ENCODE measurements at regions of chr9 and their contacts with region 1.

Region 1: GRCh38 chr9:97411789-97412625 is at the start of gene TDRD7:
- DNase-seq: peak; percentile 67 to 97 (median 80)

Region 2: GRCh38 chr9:97271292-97271691 is 140.7 kb before region 1 on chr9:
- intact Hi-C with region 1: no loop called
- DNase-seq: peak in 2 of 10 donors; percentile 73 to 79

Region 3: DNA sequence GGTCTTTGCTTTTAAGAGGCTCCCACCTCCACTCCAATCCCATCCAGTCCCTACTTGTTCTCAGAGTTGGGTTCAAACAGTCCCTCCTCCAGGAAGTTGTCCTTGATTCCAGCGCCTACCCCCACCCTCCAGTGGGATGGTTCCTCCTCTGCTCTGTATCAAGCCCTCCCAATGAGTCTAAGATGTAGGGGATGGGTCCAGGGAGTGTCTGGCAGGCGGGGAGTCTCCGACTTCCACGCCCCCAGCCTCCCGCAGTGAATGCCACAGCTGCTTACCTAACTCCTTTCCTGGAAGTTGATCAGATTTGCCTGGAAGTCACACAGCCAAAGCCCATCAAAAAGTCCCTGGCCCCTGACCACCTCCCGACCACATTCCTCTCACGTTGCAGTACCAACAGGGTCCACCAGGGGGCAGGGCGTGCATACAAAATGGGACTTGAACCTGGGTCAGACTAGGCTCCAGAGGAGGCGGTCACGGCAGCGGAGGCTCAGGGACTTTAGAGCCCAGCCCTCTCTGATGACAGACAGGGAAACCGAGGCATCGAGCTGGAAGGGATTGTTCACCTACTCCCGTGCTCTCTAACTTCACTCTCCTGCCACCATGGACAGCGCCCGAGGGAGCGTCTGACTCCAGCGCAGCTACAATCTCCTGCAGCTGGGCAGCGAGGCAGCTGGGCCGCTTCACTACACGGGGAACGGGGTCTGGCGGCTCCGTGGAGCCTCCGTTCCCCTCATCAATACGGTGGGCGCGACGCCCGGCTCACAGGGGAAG is 25.1 kb before region 1 on chr9:
- intact Hi-C with region 1: no loop called
- DNase-seq: peak; percentile 55 to 95 (median 80)

Region 4: GRCh38 chr9:97501177-97501971 is 89.4 kb after region 1 on chr9 and contains the start of gene TMOD1:
- intact Hi-C with region 1: loop called (anchors 1 kb)
- DNase-seq: peak; percentile 52 to 95 (median 68)

Region 5: DNA sequence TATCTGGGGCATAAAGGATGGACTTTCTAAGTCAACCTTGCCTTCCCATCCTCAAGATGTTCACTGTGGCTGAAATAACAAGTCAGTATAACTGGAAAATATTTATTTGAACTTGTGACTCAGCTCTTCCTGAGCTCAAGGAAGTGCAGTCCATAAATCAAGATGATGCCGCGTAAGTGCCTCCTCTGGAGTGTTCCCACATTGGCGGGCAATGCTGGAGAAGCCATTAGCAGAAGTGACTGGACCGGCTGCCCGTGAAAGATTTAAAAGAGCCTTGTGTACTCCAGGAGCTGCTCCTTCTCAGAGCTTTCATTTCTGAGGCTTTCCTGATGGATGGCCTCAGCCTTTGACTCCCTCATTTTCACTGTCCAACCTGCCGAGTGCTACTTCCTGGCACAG is 106.9 kb after region 1 on chr9:
- intact Hi-C with region 1: no loop called
- DNase-seq: no peak

Region 6: DNA sequence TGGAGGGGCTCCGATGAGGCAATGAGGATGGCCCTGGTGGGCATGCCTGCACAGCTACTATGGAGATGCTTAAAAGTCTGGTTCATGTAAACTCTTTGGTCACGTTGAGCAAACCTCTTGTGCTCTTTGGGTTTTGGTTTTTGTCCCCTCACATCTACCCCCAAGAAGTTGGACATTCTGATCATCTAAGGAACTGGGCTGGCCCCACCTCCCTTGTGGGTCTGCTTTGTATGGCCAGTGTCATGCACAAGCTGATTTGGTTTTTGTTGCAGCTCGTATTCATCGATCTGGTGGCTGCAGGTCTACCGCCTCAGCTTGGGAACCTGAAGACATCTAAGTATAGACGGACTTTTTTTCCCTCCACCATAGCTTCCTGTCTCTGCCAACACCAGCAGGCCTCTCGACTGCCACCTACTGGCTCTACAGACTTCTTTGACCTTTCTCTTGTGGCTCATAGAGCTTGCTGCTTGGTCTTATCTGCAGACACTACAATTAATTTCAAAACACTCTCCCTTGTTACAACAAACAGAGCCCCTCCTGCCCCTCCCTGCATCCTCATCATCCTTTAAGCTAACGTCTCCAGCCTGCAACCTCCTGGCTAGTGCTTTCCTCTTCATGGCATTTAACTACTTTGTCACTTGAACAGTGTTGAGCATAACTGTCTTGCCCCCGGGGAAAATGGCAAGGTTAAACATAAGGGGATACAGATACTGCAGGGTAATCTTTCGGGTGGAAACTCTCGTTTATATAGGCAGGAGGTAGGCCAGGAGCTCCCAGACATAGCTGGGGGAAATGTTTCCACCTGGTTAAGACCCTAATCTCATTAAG is 186.7 kb after region 1 on chr9:
- intact Hi-C with region 1: loop called (anchors 1 kb)
- DNase-seq: peak in 8 of 10 donors; percentile 53 to 94 (median 74)

Region 7: DNA sequence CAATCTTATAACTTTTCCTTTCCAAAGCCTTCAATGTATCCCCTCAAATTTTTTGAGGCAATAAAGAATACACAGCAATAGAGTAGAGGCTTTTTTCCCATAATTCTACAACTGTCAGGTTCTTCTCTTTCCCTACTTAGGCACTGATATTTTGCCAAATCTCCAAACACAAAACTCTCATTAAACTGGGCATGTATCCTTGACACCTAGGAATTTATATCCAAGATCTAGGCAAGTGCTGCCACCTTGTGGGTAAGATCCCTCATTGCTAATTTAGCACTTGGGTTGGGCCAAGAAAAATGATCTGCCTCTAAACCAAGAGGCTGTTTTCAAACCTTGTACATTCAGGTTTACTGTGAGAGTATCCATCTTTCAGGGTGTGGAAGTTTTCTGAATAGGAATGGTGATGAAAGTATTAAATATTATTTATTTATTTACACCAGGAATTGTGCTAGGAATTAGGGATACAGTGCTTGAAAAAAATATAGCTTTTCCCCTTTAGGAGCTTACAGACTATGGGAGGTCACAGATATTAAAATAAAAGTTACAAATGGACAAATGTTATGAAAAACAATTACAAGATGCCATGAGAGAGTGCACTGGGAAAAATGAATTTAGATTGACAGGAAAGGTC is 203.5 kb after region 1 on chr9:
- intact Hi-C with region 1: loop called (anchors 1 kb)
- DNase-seq: peak in 5 of 10 donors; percentile 63 to 80 (median 68)

Measured in posterior cingulate gyrus (tissue), 11 donors.